Stomach (tissue), 19 donors: ENCODE measurements at regions of chr9 and their contacts with region 1.

Region 1: DNA sequence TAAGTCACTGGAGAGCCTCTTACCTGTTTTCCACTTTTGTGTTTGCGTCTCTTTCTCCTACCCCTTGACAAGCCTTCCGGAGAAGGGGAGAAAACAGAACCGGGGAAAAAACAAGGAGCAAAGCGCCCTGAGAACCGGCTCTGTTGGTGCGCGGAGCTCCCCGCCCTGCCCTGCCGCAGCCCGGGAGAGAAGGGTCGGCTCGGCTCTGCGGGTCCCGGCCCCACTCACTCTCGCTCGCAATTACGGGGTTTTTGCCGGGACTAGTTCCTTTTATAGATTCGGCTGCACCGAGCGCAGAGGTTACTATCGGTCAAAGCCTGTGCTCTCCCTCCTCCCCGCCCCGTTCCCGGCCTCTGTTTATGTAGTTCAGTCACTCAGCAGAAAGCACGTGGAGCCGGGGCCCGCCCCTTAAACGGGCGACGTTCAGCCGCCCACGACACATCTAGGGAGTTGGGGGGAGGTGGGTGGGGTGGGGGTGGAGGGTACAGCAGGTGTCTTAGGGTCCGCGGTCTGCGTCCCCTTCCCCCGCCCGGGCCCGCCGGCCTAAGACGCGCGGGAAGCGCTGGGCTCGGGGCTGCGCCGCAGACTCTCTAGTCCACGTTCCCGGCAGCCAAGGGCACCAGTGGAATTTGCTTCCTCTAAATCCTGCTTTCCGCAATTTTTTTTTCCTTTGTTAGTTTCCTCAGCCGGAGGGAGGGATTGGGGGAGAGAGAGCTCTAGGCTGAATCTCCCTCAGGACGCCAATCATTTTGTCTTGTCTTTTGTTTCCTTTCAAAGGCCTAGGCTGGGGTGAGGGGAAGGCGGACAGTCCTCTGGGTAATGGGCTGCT is at the start of gene ABCA1:
- DNase-seq: peak; percentile 91 to 96
- H3K4me3 ChIP-seq: peak within 1 kb of the TSS; percentile 62 to 86 (median 70)
- H3K27ac ChIP-seq: peak within 1 kb of the TSS; percentile 83 to 91 (median 88)
- H3K4me1 ChIP-seq: peaks cover 15 to 43% (median 30%) of the 10 kb centered on the region in 4 donors
- H3K27me3 ChIP-seq: no peaks in the 10 kb centered on the region
- CTCF ChIP-seq: no peak
- EP300 ChIP-seq: no peak
- POLR2A ChIP-seq: peak in 2 of 4 donors; percentile 24 to 42
- total RNA-seq, gene ABCA1: 16.2 to 75.3 (median 21.0) TPM

Region 2: GRCh38 chr9:104968025-104968982 is 40.2 kb after region 1 on chr9:
- intact Hi-C with region 1: loop called (anchors 5 kb)
- DNase-seq: peak; percentile 92 to 95
- H3K4me3 ChIP-seq: peak overlapping the region; percentile 57 to 85 (median 64)
- H3K27ac ChIP-seq: peak overlapping the region; percentile 88 to 95 (median 91)
- H3K4me1 ChIP-seq: peaks cover 10 to 34% (median 21%) of the 10 kb centered on the region in 4 donors
- H3K27me3 ChIP-seq: no peaks in the 10 kb centered on the region
- CTCF ChIP-seq: peak in 1 of 7 experiments; percentile 28
- EP300 ChIP-seq: peak; percentile 77
- POLR2A ChIP-seq: no peak

Region 3: GRCh38 chr9:104991144-104991953 is 63.2 kb after region 1 on chr9:
- intact Hi-C with region 1: loop called (anchors 5 kb)
- DNase-seq: peak; percentile 94 to 95
- H3K4me3 ChIP-seq: peak overlapping the region; percentile 54 to 71 (median 56)
- H3K27ac ChIP-seq: peak overlapping the region; percentile 92 to 97 (median 93)
- H3K4me1 ChIP-seq: peaks cover 35 to 48% (median 42%) of the 10 kb centered on the region in 4 donors
- H3K27me3 ChIP-seq: no peaks in the 10 kb centered on the region
- CTCF ChIP-seq: no peak
- EP300 ChIP-seq: peak; percentile 24
- POLR2A ChIP-seq: no peak

Region 4: DNA sequence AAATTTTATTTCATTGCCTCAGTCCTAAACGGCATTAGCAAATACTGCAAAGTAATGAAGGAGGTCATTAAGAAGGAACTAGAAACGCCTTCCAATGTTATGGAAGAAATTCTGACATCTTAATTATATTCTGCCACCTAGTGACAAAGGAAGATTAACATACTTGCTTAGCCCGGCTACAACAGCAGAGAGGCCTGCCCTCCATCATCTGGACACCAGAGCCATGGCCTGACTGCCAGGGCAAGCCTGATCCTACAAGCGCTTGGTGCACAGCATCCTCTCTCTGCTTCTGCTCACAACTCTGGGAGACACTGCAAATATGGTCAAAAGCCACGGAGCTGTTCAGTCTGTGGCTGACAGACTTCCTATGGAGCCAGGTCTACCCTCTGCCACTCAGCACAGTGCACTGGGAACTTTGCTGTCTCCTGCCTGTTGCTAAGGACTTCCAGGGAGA is 229.0 kb after region 1 on chr9:
- intact Hi-C with region 1: loop called (anchors 5 kb)
- DNase-seq: peak; percentile 40 to 86
- H3K4me3 ChIP-seq: no peak overlapping the region
- H3K27ac ChIP-seq: peak overlapping the region in 3 of 5 donors; percentile 15 to 69 (median 48)
- H3K4me1 ChIP-seq: peaks cover 0 to 14% (median 7%) of the 10 kb centered on the region in 4 donors
- H3K27me3 ChIP-seq: no peaks in the 10 kb centered on the region
- CTCF ChIP-seq: peak in 5 of 7 experiments; percentile 18 to 56 (median 36)
- EP300 ChIP-seq: no peak
- POLR2A ChIP-seq: no peak